Posterior cingulate gyrus (tissue), 11 donors: ENCODE measurements at regions of chr20 and their contacts with region 1.

Region 1: GRCh38 chr20:63864847-63865640 is at the start of gene TPD52L2:
- DNase-seq: peak; percentile 98 to 100 (median 99)

Region 2: GRCh38 chr20:63537525-63538203 is 327.4 kb before region 1 on chr20:
- intact Hi-C with region 1: loop called (anchors 2 kb)
- DNase-seq: peak; percentile 47 to 96 (median 73)

Region 3: GRCh38 chr20:63707549-63708300 is 157.3 kb before region 1 on chr20 and contains the starts of genes ARFRP1 and ZGPAT:
- intact Hi-C with region 1: loop called (anchors 10 kb)
- DNase-seq: peak; percentile 89 to 99 (median 94)

Region 4: GRCh38 chr20:63785691-63786131 is 79.3 kb before region 1 on chr20:
- intact Hi-C with region 1: loop called (anchors 5 kb)
- DNase-seq: peak in 5 of 10 donors; percentile 48 to 92 (median 87)

Region 5: GRCh38 chr20:63881451-63882226 is 16.6 kb after region 1 on chr20:
- intact Hi-C with region 1: no loop called
- DNase-seq: no peak

Region 6: GRCh38 chr20:63894358-63895201 is 29.5 kb after region 1 on chr20 and contains the start of gene DNAJC5:
- intact Hi-C with region 1: loop called (anchors 2 kb)
- DNase-seq: peak; percentile 92 to 100 (median 96)